Cardiac septum (tissue), 1 donor: ENCODE measurements at regions of chr9 and their contacts with region 1.

Region 1: DNA sequence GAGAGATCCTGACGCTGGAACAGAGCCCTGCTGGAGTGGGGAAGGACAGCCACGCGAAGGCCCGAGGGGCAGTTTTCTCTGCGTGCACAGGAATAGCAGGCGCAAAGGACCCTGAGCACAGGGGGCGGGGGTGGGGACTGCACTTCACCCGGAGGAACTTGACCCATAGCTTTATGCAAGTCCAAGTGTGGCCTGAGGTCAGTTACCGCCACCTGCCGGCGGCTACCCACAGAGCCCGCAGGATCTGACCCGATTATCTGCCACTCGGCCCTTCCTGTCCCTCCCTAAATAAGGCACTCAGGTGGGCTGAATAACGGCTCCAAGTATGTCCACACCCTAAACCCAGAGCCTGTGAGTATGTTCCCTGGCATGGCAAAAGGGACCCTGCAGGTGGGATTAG is 65.4 kb upstream of the FCN1 start:
- DNase-seq: peak; percentile 85

Region 2: DNA sequence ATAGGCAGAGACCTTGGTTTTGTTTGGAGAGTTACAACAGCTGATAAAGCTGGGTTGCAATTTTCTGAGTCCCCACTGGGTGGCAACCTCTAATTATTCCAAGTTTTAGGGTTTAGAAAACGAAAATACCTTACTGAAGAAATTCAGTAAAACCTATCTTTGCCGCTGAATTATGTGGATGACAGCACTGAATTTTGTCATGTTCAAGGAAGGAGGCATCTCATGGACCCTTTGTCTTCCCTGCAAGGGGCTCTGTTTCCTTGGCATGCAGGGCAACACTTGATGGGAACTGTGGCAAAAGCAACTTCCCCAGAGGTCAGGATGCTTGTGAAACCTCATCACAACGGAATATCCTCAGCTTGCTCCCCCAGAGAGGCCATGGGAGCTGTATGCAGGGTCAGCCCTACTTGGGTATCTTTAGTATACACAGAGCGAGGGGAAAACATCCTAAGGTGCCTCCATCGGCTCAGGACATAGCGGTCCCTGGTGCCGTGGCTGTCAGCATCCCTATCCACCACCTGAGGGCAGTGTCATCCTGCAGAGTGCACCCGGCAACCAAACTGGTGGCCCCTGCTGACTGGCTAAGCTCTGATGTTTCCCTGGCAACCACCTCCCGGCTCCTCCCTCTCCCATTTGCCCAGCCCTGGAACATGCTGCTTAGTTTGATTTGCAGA is 533.7 kb before region 1 on chr9:
- intact Hi-C with region 1: loop called (anchors 5 kb)
- DNase-seq: peak; percentile 92

Region 3: GRCh38 chr9:134698587-134699342 is 284.3 kb before region 1 on chr9:
- intact Hi-C with region 1: loop called (anchors 5 kb)
- DNase-seq: peak; percentile 85

Region 4: GRCh38 chr9:134768709-134769351 is 214.2 kb before region 1 on chr9:
- intact Hi-C with region 1: no loop called
- DNase-seq: no peak